ENCODE measurements at regions of chr10 and their contacts with region 1.

Region 1: DNA sequence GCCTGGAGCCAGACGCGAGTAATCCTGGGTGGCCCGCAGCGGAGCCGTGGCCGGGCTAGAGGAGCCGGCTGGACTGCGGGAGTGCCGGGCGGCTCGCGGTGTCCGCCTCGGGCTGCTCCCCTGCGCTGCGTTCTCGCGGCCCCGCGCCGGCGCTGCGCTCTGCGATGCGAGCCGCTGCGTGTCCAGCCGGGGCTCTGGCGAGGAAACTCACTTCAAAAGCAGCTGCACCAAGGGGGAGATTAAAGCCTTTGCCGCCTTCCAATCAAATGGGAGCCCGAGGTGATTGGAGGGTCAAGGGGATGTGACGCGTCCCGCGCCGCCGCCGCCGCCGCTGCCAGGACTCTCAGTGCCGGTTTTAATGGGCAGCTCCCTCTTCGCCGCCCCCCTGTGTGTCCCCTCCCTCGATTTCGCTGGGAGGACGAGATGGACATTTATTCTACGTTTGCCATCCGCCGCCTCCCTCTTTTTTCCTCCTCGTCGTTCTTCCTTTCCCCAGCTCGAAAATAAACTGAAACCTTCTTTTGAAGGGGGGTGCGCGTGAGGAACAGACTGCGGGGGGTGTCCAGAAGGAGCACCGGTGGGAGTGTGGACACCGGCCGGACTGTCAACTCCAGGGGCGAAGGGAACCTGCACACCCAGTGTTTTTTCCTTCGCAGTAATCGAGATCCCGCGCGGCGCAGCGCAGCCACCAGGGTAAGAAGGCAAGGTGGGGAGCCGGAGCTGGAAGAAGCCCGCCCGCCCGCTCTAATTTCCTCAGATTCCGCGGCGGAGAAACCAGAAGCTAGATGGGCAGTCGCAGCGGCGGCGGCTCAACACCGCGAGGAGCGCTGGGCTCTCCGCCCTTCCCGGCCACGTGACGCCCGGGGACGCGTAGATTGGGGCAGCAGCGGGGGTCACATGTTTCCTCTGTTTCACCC is at the start of gene ZNF503:
- DNase-seq: peak; percentile 99
- H3K4me3 ChIP-seq: peak within 1 kb of the TSS; percentile 63 to 88 (median 87)
- H3K27ac ChIP-seq: peak within 1 kb of the TSS; percentile 89 to 98 (median 98)
- H3K4me1 ChIP-seq: peaks cover 10 to 19% of the 10 kb centered on the region in 2 donors
- H3K27me3 ChIP-seq: no peaks in the 10 kb centered on the region
- CTCF ChIP-seq: peak in 4 of 6 experiments; percentile 36 to 56 (median 48)
- POLR2A ChIP-seq: peak; percentile 81 to 97
- total RNA-seq, gene ZNF503: 8.2 to 17.1 (median 10.9) TPM

Region 2: DNA sequence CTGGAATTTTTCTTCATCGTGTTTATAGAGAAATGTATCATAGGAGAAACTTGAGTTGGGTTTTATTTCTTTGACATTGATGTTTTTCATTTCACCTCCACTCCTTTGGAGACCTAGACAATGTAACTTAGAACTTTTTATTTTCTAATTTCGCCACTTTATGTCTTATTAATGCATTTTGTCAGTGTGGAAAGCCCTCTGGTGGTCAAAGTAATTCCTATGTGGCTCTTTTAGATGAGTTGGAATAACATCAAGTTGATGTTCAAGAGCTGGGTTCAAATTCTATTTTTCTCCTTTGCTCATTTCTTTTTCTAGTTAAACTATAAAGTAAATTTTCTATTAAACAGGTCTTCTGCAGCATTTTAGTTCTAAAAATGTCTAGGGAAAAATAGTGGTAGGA is 508.2 kb after region 1 on chr10:
- intact Hi-C with region 1: loop called (anchors 2 kb)
- DNase-seq: no peak
- H3K4me3 ChIP-seq: no peak overlapping the region
- H3K27ac ChIP-seq: no peak overlapping the region
- H3K4me1 ChIP-seq: no peaks in the 10 kb centered on the region
- H3K27me3 ChIP-seq: no peaks in the 10 kb centered on the region
- CTCF ChIP-seq: peak; percentile 32 to 74 (median 59)
- POLR2A ChIP-seq: no peak

Region 3: DNA sequence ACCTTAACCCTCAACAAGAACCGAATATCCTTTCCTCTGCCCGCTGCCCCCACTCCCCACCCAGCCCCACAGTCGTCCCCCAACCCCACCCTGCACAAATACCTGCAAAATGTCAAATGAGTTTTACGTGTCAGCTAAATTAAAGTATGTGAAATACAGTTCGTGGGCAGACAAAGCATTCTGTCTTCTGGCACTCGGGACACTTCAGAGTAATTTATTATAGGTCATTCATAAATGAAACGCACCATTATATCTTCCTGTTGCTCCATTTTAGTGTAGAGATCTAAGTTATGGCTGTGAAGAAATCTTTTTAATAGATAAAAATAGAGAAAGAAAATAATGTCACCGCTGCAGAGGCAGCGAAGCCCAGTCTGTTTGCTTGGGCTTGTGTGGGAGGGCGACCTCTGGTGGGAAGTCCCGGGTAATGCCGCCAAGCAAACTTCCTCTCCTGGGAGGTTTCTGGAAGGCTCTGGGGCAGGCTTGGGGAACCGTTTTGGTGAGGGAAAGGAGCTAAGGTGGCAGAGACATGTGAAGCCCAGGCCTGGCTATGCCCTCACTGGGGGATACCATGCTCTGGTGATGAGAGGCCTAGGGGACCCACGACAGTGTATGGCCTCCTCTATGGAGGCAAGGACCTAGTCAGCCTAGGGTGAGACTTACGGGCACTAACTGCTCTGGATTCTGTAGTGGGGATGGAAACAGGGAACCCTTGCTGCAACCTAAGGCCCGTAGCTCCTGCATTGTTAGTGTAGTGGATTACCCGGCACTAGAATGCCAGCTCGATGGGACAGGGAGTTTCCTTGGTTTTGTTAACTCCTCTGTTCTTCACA is 634.5 kb after region 1 on chr10:
- intact Hi-C with region 1: loop called (anchors 5 kb)
- DNase-seq: peak; percentile 69 to 76
- H3K4me3 ChIP-seq: no peak overlapping the region
- H3K27ac ChIP-seq: no peak overlapping the region
- H3K4me1 ChIP-seq: no peaks in the 10 kb centered on the region
- H3K27me3 ChIP-seq: no peaks in the 10 kb centered on the region
- CTCF ChIP-seq: peak; percentile 76 to 96 (median 82)
- POLR2A ChIP-seq: no peak

Region 4: DNA sequence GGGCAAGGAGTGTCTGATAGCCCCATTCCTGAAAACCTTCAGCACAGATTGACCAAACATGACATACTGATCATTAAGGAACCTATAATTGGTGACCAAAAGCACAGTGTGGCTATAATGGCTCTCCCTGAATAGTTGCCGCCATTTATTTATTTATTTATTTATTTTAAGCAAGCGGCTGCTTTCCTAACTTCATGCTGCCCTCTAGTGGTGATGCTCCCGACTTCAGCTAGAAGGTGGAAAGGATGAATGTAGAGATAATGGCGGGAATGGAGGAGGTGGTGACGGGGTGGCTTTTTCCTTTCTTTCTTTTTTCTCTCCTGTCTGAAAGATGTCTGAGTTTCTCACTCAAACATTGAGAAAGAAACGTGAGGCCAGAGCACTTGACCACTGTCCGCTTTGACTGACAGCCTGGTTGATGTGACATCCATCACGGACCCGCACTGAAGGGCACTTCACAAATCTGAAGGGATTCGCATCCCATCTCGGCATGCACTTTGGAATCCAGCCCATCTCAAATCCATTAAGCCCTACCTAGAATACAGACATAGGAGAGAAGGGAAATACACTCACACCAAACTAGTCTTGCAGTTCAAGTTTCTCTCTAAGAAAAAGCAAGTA is 1145.6 kb after region 1 on chr10:
- intact Hi-C with region 1: loop called (anchors 10 kb)
- DNase-seq: peak; percentile 85 to 88
- H3K4me3 ChIP-seq: no peak overlapping the region
- H3K27ac ChIP-seq: no peak overlapping the region
- H3K4me1 ChIP-seq: peaks cover 8 to 14% of the 10 kb centered on the region in 2 donors
- H3K27me3 ChIP-seq: no peaks in the 10 kb centered on the region
- CTCF ChIP-seq: peak; percentile 69 to 89 (median 78)
- POLR2A ChIP-seq: no peak